HCT116 (cell line): ENCODE measurements at regions of chr1 and their contacts with region 1.

Region 1: DNA sequence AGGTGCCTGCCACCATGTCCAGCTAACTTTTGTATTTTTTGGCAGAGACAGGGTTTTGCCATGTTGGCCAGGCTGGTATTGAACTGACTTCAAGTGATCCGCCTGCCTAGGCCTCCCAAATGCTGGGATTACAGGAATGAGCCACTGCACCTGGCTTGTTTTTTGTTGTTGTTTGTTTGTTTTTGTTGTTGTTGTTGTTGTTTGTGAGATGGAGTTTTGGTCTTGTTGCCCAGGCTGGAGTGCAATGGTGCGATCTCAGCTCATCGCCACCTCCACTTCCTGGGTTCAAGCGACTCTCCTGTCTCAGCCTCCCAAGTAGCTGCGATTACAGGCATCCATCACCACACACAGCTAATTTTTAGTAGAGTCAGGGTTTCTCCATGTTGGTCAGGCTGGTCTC is 7.1 kb upstream of the L1TD1 start:
- DNase-seq: no peak
- ATAC-seq: no peak
- H3K4me3 ChIP-seq: no peak overlapping the region
- H3K27ac ChIP-seq: no peak overlapping the region
- H3K4me1 ChIP-seq: no peaks in the 10 kb centered on the region
- H3K27me3 ChIP-seq: no peaks in the 10 kb centered on the region
- CTCF ChIP-seq: no peak
- POLR2A ChIP-seq: no peak
- RAD21 ChIP-seq: no peak

Region 2: DNA sequence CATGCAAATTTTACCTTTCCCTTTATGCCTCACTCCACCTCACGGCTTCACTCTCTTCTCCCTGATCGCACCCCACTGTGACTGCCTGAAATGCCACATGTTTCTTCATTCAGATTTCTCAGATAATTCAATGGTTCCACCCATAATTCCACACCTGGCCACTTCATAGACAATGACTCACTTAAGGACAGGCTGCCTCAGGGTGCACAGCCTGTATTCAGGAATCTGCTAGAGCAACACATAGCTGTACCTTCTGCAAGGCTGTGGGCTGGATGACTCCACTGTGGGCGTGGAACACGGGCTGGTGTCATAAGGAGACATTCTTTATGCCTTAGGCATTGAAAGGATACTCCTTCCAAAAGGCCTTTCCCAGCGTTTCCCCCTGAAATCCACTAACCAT is 43.2 kb after region 1 on chr1:
- CTCF ChIA-PET with region 1: no interaction called
- POLR2A ChIA-PET with region 1: no interaction called
- RAD21 ChIA-PET with region 1: no interaction called
- intact Hi-C with region 1: loop called (anchors 5 kb)
- DNase-seq: peak; percentile 81
- ATAC-seq: peak; percentile 89
- H3K4me3 ChIP-seq: no peak overlapping the region
- H3K27ac ChIP-seq: 0 out of 2 replicates have a peak overlapping the region, but pooled peaks have one; percentile 1
- H3K4me1 ChIP-seq: peaks cover 16 to 44% of the 10 kb centered on the region in 2 experiments
- H3K27me3 ChIP-seq: no peaks in the 10 kb centered on the region
- CTCF ChIP-seq: no peak
- POLR2A ChIP-seq: no peak
- RAD21 ChIP-seq: no peak